ENCODE measurements at regions of chr11 and their contacts with region 1.

Region 1: GRCh38 chr11:17063171-17064002 is 14.1 kb downstream of the RPS13 start:
- ATAC-seq: peak in 6 of 8 experiments; percentile 20 to 98 (median 84)
- H3K4me3 ChIP-seq: no peak overlapping the region
- H3K27ac ChIP-seq: no peak overlapping the region
- H3K4me1 ChIP-seq: no peaks in the 10 kb centered on the region

Region 2: GRCh38 chr11:16543642-16544041 is 519.7 kb before region 1 on chr11:
- in situ Hi-C with region 1: no loop called
- ATAC-seq: no peak
- H3K4me3 ChIP-seq: no peak overlapping the region
- H3K27ac ChIP-seq: no peak overlapping the region
- H3K4me1 ChIP-seq: no peaks in the 10 kb centered on the region

Region 3: GRCh38 chr11:16945671-16946469 is 117.5 kb before region 1 on chr11:
- in situ Hi-C with region 1: loop called in 3 of 9 experiments (anchors 10 to 25 kb)
- ATAC-seq: peak; percentile 73 to 100 (median 96)
- H3K4me3 ChIP-seq: no peak overlapping the region
- H3K27ac ChIP-seq: no peak overlapping the region
- H3K4me1 ChIP-seq: peaks cover 0 to 5% of the 10 kb centered on the region in 2 donors

Region 4: DNA sequence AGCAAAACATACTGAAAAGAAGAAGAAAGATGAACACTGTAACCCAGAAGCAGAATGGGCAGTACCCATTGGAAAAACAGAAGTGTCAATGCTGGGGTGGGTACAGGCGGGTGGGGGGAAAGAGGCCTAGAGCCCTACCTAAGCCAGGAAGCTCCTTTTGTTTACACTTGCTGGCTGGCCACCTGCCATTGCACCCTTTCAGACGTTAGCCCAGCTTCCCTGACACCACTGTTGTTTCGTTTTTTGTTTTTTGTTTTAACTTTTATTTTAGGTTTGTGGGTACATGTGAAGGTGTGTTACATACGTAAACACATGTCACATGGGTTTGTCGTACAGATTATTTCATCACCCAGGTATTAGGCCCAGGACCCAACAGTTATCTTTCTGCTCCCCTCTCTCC is 104.6 kb before region 1 on chr11:
- in situ Hi-C with region 1: no loop called
- ATAC-seq: no peak
- H3K4me3 ChIP-seq: no peak overlapping the region
- H3K27ac ChIP-seq: no peak overlapping the region
- H3K4me1 ChIP-seq: no peaks in the 10 kb centered on the region

Region 5: DNA sequence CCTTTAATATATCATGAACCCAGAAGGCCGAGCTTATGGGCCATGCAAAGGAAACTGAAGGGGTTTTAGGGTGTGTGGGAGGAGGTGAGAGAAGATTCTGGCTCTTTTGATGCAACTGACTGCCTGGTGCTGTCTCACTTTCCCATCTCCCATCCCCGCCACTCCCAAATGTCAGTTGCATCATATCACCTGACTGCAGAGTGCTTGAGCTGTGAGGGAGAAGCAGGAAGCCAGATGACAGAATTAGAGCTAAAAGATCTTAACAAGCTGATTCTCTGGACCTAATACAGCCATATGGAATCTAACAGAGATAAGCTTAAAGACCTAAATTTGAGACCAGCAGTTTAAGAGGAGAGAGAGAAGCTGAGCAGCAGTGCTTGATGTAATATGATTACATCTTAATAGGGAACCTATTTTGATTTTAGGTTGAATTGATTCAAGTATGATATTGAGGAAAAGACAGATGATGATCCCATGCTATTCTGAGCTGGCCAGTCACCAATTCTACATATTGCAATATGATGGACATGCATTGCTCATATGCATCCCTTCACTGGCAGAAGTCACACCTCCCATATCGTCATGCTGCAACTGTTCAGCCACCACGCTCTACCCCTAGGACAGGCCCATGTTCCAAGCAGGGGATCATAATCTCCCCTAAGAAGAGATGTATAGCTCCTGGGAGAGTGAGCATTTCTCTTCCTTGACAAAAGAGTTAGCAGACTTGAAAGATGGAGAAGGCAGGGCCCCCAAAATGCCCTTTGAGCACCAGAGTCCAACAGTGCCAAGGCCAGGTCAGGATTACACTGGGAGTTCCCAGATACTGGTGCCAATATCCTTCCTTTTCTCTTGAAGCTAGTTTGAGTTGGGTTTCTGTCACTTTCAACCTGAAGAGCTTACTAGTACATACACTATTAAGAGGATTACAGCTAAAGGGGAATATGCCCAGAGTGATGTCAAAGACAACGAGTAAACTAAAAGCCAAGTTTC is 94.1 kb before region 1 on chr11:
- in situ Hi-C with region 1: no loop called
- ATAC-seq: peak in 7 of 8 experiments; percentile 31 to 77 (median 59)
- H3K4me3 ChIP-seq: no peak overlapping the region
- H3K27ac ChIP-seq: no peak overlapping the region
- H3K4me1 ChIP-seq: no peaks in the 10 kb centered on the region